ENCODE measurements at regions of chr1 and their contacts with region 1.

Region 1: DNA sequence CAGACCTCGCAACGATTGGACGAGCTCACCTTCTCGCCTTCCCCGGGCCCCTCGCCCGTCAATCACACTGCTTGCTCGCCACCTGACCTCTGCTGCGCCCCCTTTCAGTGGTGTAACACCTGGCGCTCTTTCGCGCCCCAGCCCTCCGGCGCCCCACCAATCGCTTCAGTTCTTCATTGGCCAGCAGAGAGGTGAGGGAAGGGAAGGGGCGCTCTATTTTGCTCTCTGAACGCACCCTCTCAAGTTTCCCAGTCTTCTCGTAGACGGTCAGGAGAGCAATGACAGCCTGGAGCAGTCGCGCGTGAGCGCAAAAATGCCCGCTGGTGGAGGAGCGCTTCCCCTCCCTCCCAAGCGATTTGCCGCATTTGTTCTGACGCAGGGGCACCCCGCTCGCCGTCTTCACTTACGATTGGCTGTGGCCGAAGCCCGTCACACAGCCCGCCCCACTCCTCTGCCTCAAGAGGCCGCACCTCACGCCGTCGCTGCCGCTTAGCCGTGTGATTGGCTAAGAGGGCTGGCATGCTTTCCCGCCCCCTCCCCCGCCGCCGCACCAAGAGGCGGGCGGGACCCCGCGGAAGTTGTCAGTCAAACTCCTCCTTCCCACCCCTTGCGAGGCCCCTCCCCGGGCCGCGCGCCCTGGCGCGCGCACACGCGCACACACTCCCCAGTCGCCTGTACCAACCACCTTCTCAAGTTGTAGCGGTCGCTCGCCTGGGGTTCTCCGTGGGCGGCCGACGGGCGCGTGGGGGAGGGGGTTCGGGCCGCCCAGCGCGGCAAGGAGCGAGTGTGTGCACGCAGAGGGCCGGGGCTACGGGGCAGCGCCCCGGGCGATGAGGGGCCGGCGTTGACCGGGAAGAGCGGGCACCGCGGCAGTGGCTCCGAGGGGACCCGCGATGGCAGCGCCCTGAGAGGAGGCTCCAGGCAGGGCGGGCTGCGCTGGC is at the start of gene PPP2R5A:
- DNase-seq: peak; percentile 95 to 99 (median 99)
- ATAC-seq: peak; percentile 92
- H3K4me3 ChIP-seq: peak within 1 kb of the TSS; percentile 96
- H3K4me3 Mint-ChIP-seq: peak within 1 kb of the TSS; percentile 94 to 100 (median 98)
- H3K27ac ChIP-seq: peak within 1 kb of the TSS; percentile 96
- H3K27ac Mint-ChIP-seq: peak within 1 kb of the TSS; percentile 96 to 99 (median 98)
- H3K4me1 ChIP-seq: peaks cover 19 to 26% of the 10 kb centered on the region in 2 donors
- H3K4me1 Mint-ChIP-seq: peaks cover 21 to 49% (median 43%) of the 10 kb centered on the region in 7 donors
- H3K27me3 ChIP-seq: no peaks in the 10 kb centered on the region
- H3K27me3 Mint-ChIP-seq: peaks cover 0 to 6% (median 0%) of the 10 kb centered on the region in 5 donors
- total RNA-seq, gene PPP2R5A: 38.5 to 52.7 (median 49.8) TPM

Region 2: GRCh38 chr1:211382714-211383480 is 902.1 kb before region 1 on chr1:
- CTCF ChIA-PET with region 1: no interaction called
- POLR2A ChIA-PET with region 1: no interaction called
- intact Hi-C with region 1: loop called in 1 of 2 experiments (anchors 5 kb)
- DNase-seq: peak; percentile 53 to 85 (median 64)
- ATAC-seq: peak; percentile 94
- H3K4me3 ChIP-seq: peak overlapping the region; percentile 77
- H3K4me3 Mint-ChIP-seq: peak overlapping the region; percentile 87 to 97 (median 92)
- H3K27ac ChIP-seq: peak overlapping the region; percentile 80
- H3K27ac Mint-ChIP-seq: peak overlapping the region; percentile 92 to 98 (median 95)
- H3K4me1 ChIP-seq: peaks cover 5% of the 10 kb centered on the region in 2 donors
- H3K4me1 Mint-ChIP-seq: peaks cover 0 to 39% (median 31%) of the 10 kb centered on the region in 7 donors
- H3K27me3 ChIP-seq: no peaks in the 10 kb centered on the region
- H3K27me3 Mint-ChIP-seq: peaks cover 0 to 5% (median 0%) of the 10 kb centered on the region in 5 donors

Region 3: GRCh38 chr1:211698161-211699026 is 586.6 kb before region 1 on chr1:
- CTCF ChIA-PET with region 1: no interaction called
- POLR2A ChIA-PET with region 1: no interaction called
- intact Hi-C with region 1: loop called in 1 of 2 experiments (anchors 5 kb)
- DNase-seq: peak; percentile 60 to 87 (median 72)
- ATAC-seq: peak; percentile 96
- H3K4me3 ChIP-seq: no peak overlapping the region
- H3K4me3 Mint-ChIP-seq: peak overlapping the region; percentile 23 to 83 (median 65)
- H3K27ac ChIP-seq: no peak overlapping the region
- H3K27ac Mint-ChIP-seq: peak overlapping the region in 2 of 9 donors; percentile 5 to 62
- H3K4me1 ChIP-seq: peaks cover 4 to 16% of the 10 kb centered on the region in 2 donors
- H3K4me1 Mint-ChIP-seq: peaks cover 0 to 42% (median 9%) of the 10 kb centered on the region in 7 donors
- H3K27me3 ChIP-seq: no peaks in the 10 kb centered on the region
- H3K27me3 Mint-ChIP-seq: peaks cover 0 to 37% (median 0%) of the 10 kb centered on the region in 5 donors

Region 4: DNA sequence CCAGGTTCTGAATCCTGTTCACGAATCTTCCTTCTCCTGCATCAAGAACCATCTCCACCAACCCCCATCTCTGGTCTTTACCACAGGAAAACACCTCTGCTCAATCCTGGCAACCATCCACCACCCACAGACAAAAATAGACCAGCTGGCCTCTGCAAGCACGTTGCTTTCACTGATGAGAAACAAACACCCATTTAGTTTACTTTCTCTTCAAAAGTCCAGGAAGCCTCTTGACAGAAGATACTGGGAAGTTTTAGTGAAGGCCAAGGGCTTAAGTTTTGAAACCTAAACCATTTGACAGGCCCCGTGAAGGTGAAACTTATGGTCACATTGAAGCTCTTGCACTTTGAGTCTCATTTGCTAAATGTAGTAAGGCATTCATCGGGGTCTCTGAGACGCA is 122.4 kb before region 1 on chr1:
- CTCF ChIA-PET with region 1: no interaction called
- POLR2A ChIA-PET with region 1: interaction called, 3 read pairs
- intact Hi-C with region 1: loop called (anchors 2 kb)
- DNase-seq: peak in 7 of 9 donors; percentile 1 to 31 (median 23)
- ATAC-seq: no peak
- H3K4me3 ChIP-seq: peak overlapping the region; percentile 0
- H3K4me3 Mint-ChIP-seq: peak overlapping the region in 8 of 10 donors; percentile 27 to 77 (median 54)
- H3K27ac ChIP-seq: no peak overlapping the region
- H3K27ac Mint-ChIP-seq: peak overlapping the region in 6 of 9 donors; percentile 6 to 46 (median 28)
- H3K4me1 ChIP-seq: peaks cover 11 to 26% of the 10 kb centered on the region in 2 donors
- H3K4me1 Mint-ChIP-seq: peaks cover 17 to 40% (median 30%) of the 10 kb centered on the region in 7 donors
- H3K27me3 ChIP-seq: no peaks in the 10 kb centered on the region
- H3K27me3 Mint-ChIP-seq: no peaks in the 10 kb centered on the region

Region 5: GRCh38 chr1:212315907-212316306 is 30.9 kb after region 1 on chr1:
- CTCF ChIA-PET with region 1: no interaction called
- POLR2A ChIA-PET with region 1: no interaction called
- intact Hi-C with region 1: no loop called
- DNase-seq: no peak
- ATAC-seq: no peak
- H3K4me3 ChIP-seq: no peak overlapping the region
- H3K4me3 Mint-ChIP-seq: peak overlapping the region in 6 of 10 donors; percentile 6 to 57 (median 37)
- H3K27ac ChIP-seq: no peak overlapping the region
- H3K27ac Mint-ChIP-seq: peak overlapping the region in 7 of 9 donors; percentile 19 to 79 (median 39)
- H3K4me1 ChIP-seq: peaks cover 0 to 6% of the 10 kb centered on the region in 2 donors
- H3K4me1 Mint-ChIP-seq: peaks cover 19 to 59% (median 47%) of the 10 kb centered on the region in 7 donors
- H3K27me3 ChIP-seq: no peaks in the 10 kb centered on the region
- H3K27me3 Mint-ChIP-seq: no peaks in the 10 kb centered on the region

Region 6: GRCh38 chr1:212328248-212328647 is 43.2 kb after region 1 on chr1:
- CTCF ChIA-PET with region 1: no interaction called
- POLR2A ChIA-PET with region 1: interaction called, 3 read pairs
- intact Hi-C with region 1: loop called in 1 of 2 experiments (anchors 5 kb)
- DNase-seq: no peak
- ATAC-seq: no peak
- H3K4me3 ChIP-seq: no peak overlapping the region
- H3K4me3 Mint-ChIP-seq: no peak overlapping the region
- H3K27ac ChIP-seq: no peak overlapping the region
- H3K27ac Mint-ChIP-seq: peak overlapping the region in 2 of 9 donors; percentile 54 to 65
- H3K4me1 ChIP-seq: peaks cover 0 to 12% of the 10 kb centered on the region in 2 donors
- H3K4me1 Mint-ChIP-seq: peaks cover 11 to 55% (median 46%) of the 10 kb centered on the region in 7 donors
- H3K27me3 ChIP-seq: no peaks in the 10 kb centered on the region
- H3K27me3 Mint-ChIP-seq: no peaks in the 10 kb centered on the region

Region 7: GRCh38 chr1:212558693-212559480 is 273.9 kb after region 1 on chr1:
- CTCF ChIA-PET with region 1: no interaction called
- POLR2A ChIA-PET with region 1: interaction called, 3 read pairs
- intact Hi-C with region 1: loop called in 1 of 2 experiments (anchors 1 kb)
- DNase-seq: peak; percentile 83 to 93 (median 91)
- ATAC-seq: peak; percentile 97
- H3K4me3 ChIP-seq: peak overlapping the region; percentile 54
- H3K4me3 Mint-ChIP-seq: peak overlapping the region; percentile 82 to 95 (median 90)
- H3K27ac ChIP-seq: peak overlapping the region; percentile 74
- H3K27ac Mint-ChIP-seq: peak overlapping the region; percentile 91 to 99 (median 98)
- H3K4me1 ChIP-seq: peaks cover 7 to 13% of the 10 kb centered on the region in 2 donors
- H3K4me1 Mint-ChIP-seq: peaks cover 6 to 15% (median 9%) of the 10 kb centered on the region in 7 donors
- H3K27me3 ChIP-seq: no peaks in the 10 kb centered on the region
- H3K27me3 Mint-ChIP-seq: peaks cover 0 to 45% (median 0%) of the 10 kb centered on the region in 5 donors

Region 8: GRCh38 chr1:213015099-213016050 is 730.4 kb after region 1 on chr1 and contains the start of gene ANGEL2:
- CTCF ChIA-PET with region 1: no interaction called
- POLR2A ChIA-PET with region 1: no interaction called
- intact Hi-C with region 1: loop called (anchors 1 kb)
- DNase-seq: peak; percentile 77 to 97 (median 93)
- ATAC-seq: peak; percentile 99
- H3K4me3 ChIP-seq: peak within 1 kb of the TSS; percentile 87
- H3K4me3 Mint-ChIP-seq: peak within 1 kb of the TSS; percentile 92 to 100 (median 100)
- H3K27ac ChIP-seq: peak within 1 kb of the TSS; percentile 82
- H3K27ac Mint-ChIP-seq: peak within 1 kb of the TSS; percentile 94 to 100 (median 99)
- H3K4me1 ChIP-seq: peaks cover 12 to 19% of the 10 kb centered on the region in 2 donors
- H3K4me1 Mint-ChIP-seq: peaks cover 26 to 47% (median 40%) of the 10 kb centered on the region in 7 donors
- H3K27me3 ChIP-seq: no peaks in the 10 kb centered on the region
- H3K27me3 Mint-ChIP-seq: peaks cover 0 to 7% (median 0%) of the 10 kb centered on the region in 5 donors
- total RNA-seq, gene ANGEL2: 57.8 to 96.5 (median 63.4) TPM